ENCODE measurements at regions of chr17 and their contacts with region 1.

Region 1: GRCh38 chr17:75238684-75239191 is 22.7 kb downstream of the GGA3 start:
- DNase-seq: peak in 1 of 2 experiments; percentile 72
- H3K4me3 ChIP-seq: no peak overlapping the region
- H3K27ac ChIP-seq: no peak overlapping the region
- H3K4me1 ChIP-seq: peaks cover 0 to 4% (median 0%) of the 10 kb centered on the region in 4 experiments; a peak in 3 of 7 replicates
- H3K27me3 ChIP-seq: no peaks in the 10 kb centered on the region
- CTCF ChIP-seq: peak; percentile 83 to 96 (median 94)
- EP300 ChIP-seq: no peak
- POLR2A ChIP-seq: no peak
- RAD21 ChIP-seq: peak; percentile 41 to 59

Region 2: GRCh38 chr17:75147878-75148546 is 90.7 kb before region 1 on chr17:
- CTCF ChIA-PET with region 1: interaction called, 13 read pairs
- POLR2A ChIA-PET with region 1: no interaction called
- DNase-seq: no peak
- H3K4me3 ChIP-seq: no peak overlapping the region
- H3K27ac ChIP-seq: no peak overlapping the region
- H3K4me1 ChIP-seq: peaks cover 0 to 2% (median 1%) of the 10 kb centered on the region in 4 experiments; a peak in 2 of 7 replicates
- H3K27me3 ChIP-seq: no peaks in the 10 kb centered on the region
- CTCF ChIP-seq: no peak
- EP300 ChIP-seq: no peak
- POLR2A ChIP-seq: no peak
- RAD21 ChIP-seq: no peak

Region 3: GRCh38 chr17:75228305-75228704 is 10.4 kb before region 1 on chr17:
- CTCF ChIA-PET with region 1: interaction called, 84 read pairs
- POLR2A ChIA-PET with region 1: interaction called, 17 read pairs
- DNase-seq: no peak
- H3K4me3 ChIP-seq: no peak overlapping the region
- H3K27ac ChIP-seq: no peak overlapping the region
- H3K4me1 ChIP-seq: no peaks in the 10 kb centered on the region
- H3K27me3 ChIP-seq: no peaks in the 10 kb centered on the region
- CTCF ChIP-seq: no peak
- EP300 ChIP-seq: no peak
- POLR2A ChIP-seq: no peak
- RAD21 ChIP-seq: no peak

Region 4: GRCh38 chr17:75271233-75271954 is 32.7 kb after region 1 on chr17:
- CTCF ChIA-PET with region 1: interaction called, 369 read pairs
- POLR2A ChIA-PET with region 1: interaction called, 53 read pairs
- DNase-seq: peak in 1 of 2 experiments; percentile 88
- H3K4me3 ChIP-seq: peak overlapping the region; percentile 84 to 91 (median 87)
- H3K27ac ChIP-seq: 0 out of 2 replicates have a peak overlapping the region, but pooled peaks have one; percentile 11
- H3K4me1 ChIP-seq: peaks cover 0 to 9% (median 7%) of the 10 kb centered on the region in 4 experiments; a peak in 4 of 7 replicates
- H3K27me3 ChIP-seq: no peaks in the 10 kb centered on the region
- CTCF ChIP-seq: peak; percentile 80 to 87 (median 86)
- EP300 ChIP-seq: no peak
- POLR2A ChIP-seq: peak in 1 of 2 experiments; percentile 16; a peak in 1 of 3 replicates
- RAD21 ChIP-seq: peak in 1 of 2 experiments; percentile 44; a peak in 2 of 4 replicates

Region 5: GRCh38 chr17:75412455-75413317 is 173.9 kb after region 1 on chr17:
- CTCF ChIA-PET with region 1: interaction called, 36 read pairs
- POLR2A ChIA-PET with region 1: interaction called, 4 read pairs
- DNase-seq: peak in 1 of 2 experiments; percentile 86
- H3K4me3 ChIP-seq: no peak overlapping the region
- H3K27ac ChIP-seq: no peak overlapping the region
- H3K4me1 ChIP-seq: no peaks in the 10 kb centered on the region
- H3K27me3 ChIP-seq: no peaks in the 10 kb centered on the region
- CTCF ChIP-seq: peak; percentile 70 to 95 (median 87)
- EP300 ChIP-seq: no peak
- POLR2A ChIP-seq: no peak
- RAD21 ChIP-seq: peak; percentile 94 to 98

Measured in H1 (cell line).